Mammary epithelial cell (primary cell): ENCODE measurements at regions of chr10 and their contacts with region 1.

Region 1: DNA sequence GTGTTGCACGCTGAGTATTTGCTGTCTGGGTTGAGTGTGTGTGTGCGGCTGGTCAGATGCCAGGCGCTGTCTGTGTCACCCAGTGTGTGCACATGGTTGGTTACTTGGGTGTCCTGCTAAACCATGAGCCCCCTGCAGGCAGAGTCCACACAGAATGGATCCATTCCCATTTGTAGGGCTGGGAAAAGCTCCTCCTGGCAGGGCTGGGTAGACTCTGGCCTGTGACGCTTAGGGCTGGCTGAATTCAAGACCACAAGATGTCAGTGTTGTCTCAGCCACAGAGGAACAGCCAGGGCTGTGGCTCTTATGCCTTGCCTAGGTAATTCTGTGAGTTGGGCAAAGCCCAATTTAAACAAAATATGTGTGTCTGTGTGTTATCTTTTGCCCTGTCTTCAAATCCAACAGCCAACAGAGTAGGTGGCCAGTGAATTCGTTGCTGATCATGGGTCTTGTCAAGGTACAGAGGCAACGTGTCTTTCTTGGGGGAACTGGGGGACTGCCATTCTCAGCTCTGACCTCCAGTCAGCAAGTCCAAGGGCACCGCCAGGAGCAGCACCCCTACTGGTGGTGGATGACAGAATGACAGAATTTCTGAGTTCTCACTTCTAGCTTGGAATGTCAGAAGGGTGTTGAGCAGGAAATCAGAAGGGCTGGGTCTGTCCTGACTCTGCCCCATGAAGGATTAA is 285.1 kb downstream of the CCSER2 start:
- DNase-seq: peak; percentile 51
- H3K4me3 ChIP-seq: no peak overlapping the region
- H3K27ac ChIP-seq: no peak overlapping the region
- H3K4me1 ChIP-seq: no peaks in the 10 kb centered on the region
- H3K27me3 ChIP-seq: no peaks in the 10 kb centered on the region
- CTCF ChIP-seq: peak; percentile 51 to 72

Region 2: DNA sequence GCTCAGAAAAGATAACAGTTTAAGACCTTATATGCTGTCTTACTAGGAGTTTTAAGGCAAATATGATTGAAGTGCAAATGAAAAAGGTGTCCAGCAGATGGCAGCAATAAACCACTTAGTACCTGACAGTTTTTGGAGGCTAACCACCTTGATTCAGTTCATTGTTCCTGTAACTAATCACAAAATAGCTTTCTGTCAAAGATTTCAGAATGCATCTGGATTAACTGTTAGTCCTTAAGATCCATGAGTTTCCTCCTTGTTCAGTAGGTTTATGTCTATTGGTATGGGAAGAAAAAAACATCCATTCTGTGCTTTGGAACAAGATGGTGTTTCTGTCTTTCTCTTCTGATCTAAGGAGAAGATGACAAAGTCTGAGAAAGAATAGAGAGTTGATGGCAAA is 238.5 kb before region 1 on chr10:
- CTCF ChIA-PET with region 1: no interaction called
- dilution Hi-C with region 1: no loop called
- in situ Hi-C with region 1: no loop called
- intact Hi-C with region 1: loop called (anchors 1 kb)
- DNase-seq: peak; percentile 51
- H3K4me3 ChIP-seq: no peak overlapping the region
- H3K27ac ChIP-seq: no peak overlapping the region
- H3K4me1 ChIP-seq: no peaks in the 10 kb centered on the region
- H3K27me3 ChIP-seq: no peaks in the 10 kb centered on the region
- CTCF ChIP-seq: peak; percentile 71 to 75

Region 3: DNA sequence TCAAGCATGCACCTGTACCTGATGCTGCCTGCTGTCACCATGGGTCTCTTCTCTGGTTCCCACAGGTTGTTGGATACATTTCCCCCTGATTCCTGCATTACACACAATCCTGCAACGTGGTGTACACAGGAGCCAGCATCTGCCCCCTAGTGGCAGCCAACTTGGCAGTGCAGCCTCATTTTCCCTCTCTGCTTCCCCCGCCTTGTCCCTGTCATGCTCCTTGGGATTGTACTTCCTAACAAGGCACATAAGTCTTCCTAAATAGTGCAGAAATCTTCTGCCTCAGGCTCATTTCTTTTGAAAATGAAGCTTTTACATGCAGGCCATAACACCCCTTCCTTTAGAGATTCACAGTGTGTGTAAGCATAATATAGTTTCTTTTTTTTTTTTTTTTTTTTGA is 102.4 kb after region 1 on chr10:
- CTCF ChIA-PET with region 1: interaction called, 4 read pairs
- dilution Hi-C with region 1: no loop called
- in situ Hi-C with region 1: no loop called
- intact Hi-C with region 1: loop called (anchors 1 kb)
- DNase-seq: peak; percentile 26
- H3K4me3 ChIP-seq: no peak overlapping the region
- H3K27ac ChIP-seq: no peak overlapping the region
- H3K4me1 ChIP-seq: no peaks in the 10 kb centered on the region
- H3K27me3 ChIP-seq: no peaks in the 10 kb centered on the region
- CTCF ChIP-seq: peak; percentile 89 to 96

Region 4: GRCh38 chr10:84783386-84783785 is 169.9 kb after region 1 on chr10:
- CTCF ChIA-PET with region 1: no interaction called
- dilution Hi-C with region 1: no loop called
- in situ Hi-C with region 1: no loop called
- intact Hi-C with region 1: loop called (anchors 1 kb)
- DNase-seq: peak; percentile 24
- H3K4me3 ChIP-seq: no peak overlapping the region
- H3K27ac ChIP-seq: no peak overlapping the region
- H3K4me1 ChIP-seq: no peaks in the 10 kb centered on the region
- H3K27me3 ChIP-seq: no peaks in the 10 kb centered on the region
- CTCF ChIP-seq: peak; percentile 82 to 90